A549 (cell line): ENCODE measurements at regions of chr10 and their contacts with region 1.

Region 1: GRCh38 chr10:16843252-16843870 is 26.1 kb upstream of the RSU1 start:
- DNase-seq: peak; percentile 28 to 72
- ATAC-seq: peak; percentile 78 to 86; a peak in 5 of 6 replicates
- H3K4me3 ChIP-seq: no peak overlapping the region
- H3K27ac ChIP-seq: no peak overlapping the region
- H3K4me1 ChIP-seq: no peaks in the 10 kb centered on the region
- CTCF ChIP-seq: peak; percentile 83
- EP300 ChIP-seq: no peak
- POLR2A ChIP-seq: no peak
- RAD21 ChIP-seq: peak; percentile 80 to 89

Region 2: GRCh38 chr10:16799621-16800020 is 43.7 kb before region 1 on chr10:
- CTCF ChIA-PET with region 1: no interaction called
- POLR2A ChIA-PET with region 1: no interaction called
- DNase-seq: no peak
- ATAC-seq: no peak
- H3K4me3 ChIP-seq: no peak overlapping the region
- H3K27ac ChIP-seq: no peak overlapping the region
- H3K4me1 ChIP-seq: no peaks in the 10 kb centered on the region
- CTCF ChIP-seq: no peak
- EP300 ChIP-seq: no peak
- POLR2A ChIP-seq: no peak
- RAD21 ChIP-seq: no peak

Region 3: DNA sequence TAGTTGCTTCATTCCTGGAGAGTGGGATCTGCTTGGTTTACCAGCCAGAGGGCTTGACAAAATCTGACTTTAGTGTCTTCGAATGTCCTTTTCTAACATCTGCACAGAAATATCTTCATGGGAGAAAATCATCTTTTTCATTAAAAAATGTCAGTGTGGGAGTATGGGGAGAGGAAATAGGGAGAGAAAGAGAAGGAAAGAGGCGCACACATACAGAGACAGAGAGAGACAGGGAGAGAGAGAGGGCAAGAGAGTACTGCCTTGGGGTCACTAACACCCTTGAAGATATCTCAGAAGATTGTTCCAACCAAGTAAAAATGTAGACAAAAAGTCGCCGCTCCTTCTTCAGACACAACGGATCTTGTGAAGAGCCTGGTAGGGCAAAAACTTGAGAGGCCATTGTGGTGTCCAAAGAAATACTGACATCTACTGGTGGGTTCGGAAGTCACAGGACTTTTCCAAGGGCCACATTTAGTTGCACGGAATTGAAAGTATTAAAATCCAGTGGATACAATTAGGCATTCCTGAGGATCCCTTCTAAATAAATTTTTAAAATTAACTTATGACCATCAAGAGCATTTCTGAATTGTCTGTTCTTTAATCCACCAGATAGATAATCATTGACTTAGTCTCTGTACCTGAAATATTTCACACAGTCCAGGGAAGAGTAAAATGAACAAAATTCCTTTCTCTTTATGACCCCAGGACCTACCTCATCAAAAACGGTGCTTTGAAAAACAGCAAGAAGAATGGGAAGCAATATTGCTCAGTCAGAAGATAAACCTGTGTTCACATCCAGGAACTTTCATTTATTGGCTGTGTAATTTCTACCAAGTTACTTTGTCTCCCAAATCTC is 414.3 kb after region 1 on chr10:
- CTCF ChIA-PET with region 1: interaction called, 14 read pairs
- POLR2A ChIA-PET with region 1: no interaction called
- DNase-seq: peak; percentile 52 to 69
- ATAC-seq: peak; percentile 85 to 97
- H3K4me3 ChIP-seq: 0 out of 3 replicates have a peak overlapping the region, but pooled peaks have one; percentile 6
- H3K27ac ChIP-seq: no peak overlapping the region
- H3K4me1 ChIP-seq: no peaks in the 10 kb centered on the region
- CTCF ChIP-seq: peak; percentile 96
- EP300 ChIP-seq: no peak
- POLR2A ChIP-seq: no peak
- RAD21 ChIP-seq: peak; percentile 96 to 97